Pancreas (tissue), 10 donors: ENCODE measurements at regions of chrX and their contacts with region 1.

Region 1: GRCh38 chrX:72126539-72127140 is 5.1 kb downstream of the RTL5 start:
- DNase-seq: peak; percentile 61 to 94 (median 86)
- ATAC-seq: peak; percentile 84 to 92 (median 91)
- H3K4me3 ChIP-seq: no peak overlapping the region
- H3K27ac ChIP-seq: peak overlapping the region in 1 of 4 donors; percentile 11
- H3K4me1 ChIP-seq: peaks cover 0 to 4% (median 0%) of the 10 kb centered on the region in 3 donors
- H3K27me3 ChIP-seq: peaks cover 0 to 26% (median 0%) of the 10 kb centered on the region in 4 donors
- CTCF ChIP-seq: peak; percentile 83 to 89 (median 88)

Region 2: DNA sequence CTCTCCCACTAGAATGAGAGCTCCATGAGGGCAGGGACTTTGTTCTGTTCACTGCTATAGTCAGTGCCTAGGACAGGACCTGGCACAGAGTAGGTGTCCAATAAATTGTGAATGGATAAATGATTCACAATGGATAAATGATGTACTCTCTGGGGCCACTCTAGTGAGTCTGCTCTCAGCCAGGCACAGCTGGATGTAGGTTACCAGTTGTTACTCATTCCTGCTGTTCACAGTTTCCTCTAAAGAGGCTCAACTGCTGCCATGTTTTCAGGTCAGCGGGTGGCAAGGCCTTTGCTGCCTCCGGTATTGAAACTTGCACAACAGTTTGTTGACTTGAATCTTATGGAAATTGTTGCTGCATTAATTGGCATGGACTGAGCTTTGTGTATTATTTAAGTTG is 116.9 kb before region 1 on chrX:
- intact Hi-C with region 1: loop called in 1 of 3 experiments (anchors 5 kb)
- DNase-seq: no peak
- ATAC-seq: no peak
- H3K4me3 ChIP-seq: no peak overlapping the region
- H3K27ac ChIP-seq: no peak overlapping the region
- H3K4me1 ChIP-seq: no peaks in the 10 kb centered on the region
- H3K27me3 ChIP-seq: peaks cover 0 to 5% (median 2%) of the 10 kb centered on the region in 4 donors
- CTCF ChIP-seq: no peak

Region 3: DNA sequence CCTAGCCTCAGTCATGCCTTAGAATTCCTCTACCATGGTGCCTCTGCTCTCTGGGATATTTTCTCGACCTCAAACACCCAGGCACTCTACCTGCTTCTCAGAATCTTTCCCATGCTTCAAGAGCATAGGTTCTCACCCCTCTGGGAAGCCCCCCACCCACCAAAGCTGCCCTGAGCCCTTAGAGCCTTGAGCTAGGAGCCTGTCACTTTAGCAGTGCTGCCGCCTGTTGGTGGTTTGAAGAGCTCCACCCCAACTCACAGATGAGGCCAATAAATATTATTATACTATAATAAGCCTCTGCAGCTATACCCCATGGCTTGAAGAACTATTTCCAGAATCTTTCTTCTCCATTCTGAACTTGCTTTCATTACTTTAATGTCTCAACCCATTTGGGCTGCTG is 104.7 kb before region 1 on chrX:
- intact Hi-C with region 1: loop called in 1 of 3 experiments (anchors 10 kb)
- DNase-seq: no peak
- ATAC-seq: no peak
- H3K4me3 ChIP-seq: no peak overlapping the region
- H3K27ac ChIP-seq: no peak overlapping the region
- H3K4me1 ChIP-seq: no peaks in the 10 kb centered on the region
- H3K27me3 ChIP-seq: peaks cover 0 to 5% (median 0%) of the 10 kb centered on the region in 4 donors
- CTCF ChIP-seq: peak in 1 of 4 donors; percentile 15

Region 4: GRCh38 chrX:72676465-72676864 is 549.8 kb after region 1 on chrX:
- intact Hi-C with region 1: no loop called
- DNase-seq: no peak
- ATAC-seq: no peak
- H3K4me3 ChIP-seq: no peak overlapping the region
- H3K27ac ChIP-seq: no peak overlapping the region
- H3K4me1 ChIP-seq: no peaks in the 10 kb centered on the region
- H3K27me3 ChIP-seq: no peaks in the 10 kb centered on the region
- CTCF ChIP-seq: no peak